ENCODE measurements at regions of chr1 and their contacts with region 1.

Region 1: DNA sequence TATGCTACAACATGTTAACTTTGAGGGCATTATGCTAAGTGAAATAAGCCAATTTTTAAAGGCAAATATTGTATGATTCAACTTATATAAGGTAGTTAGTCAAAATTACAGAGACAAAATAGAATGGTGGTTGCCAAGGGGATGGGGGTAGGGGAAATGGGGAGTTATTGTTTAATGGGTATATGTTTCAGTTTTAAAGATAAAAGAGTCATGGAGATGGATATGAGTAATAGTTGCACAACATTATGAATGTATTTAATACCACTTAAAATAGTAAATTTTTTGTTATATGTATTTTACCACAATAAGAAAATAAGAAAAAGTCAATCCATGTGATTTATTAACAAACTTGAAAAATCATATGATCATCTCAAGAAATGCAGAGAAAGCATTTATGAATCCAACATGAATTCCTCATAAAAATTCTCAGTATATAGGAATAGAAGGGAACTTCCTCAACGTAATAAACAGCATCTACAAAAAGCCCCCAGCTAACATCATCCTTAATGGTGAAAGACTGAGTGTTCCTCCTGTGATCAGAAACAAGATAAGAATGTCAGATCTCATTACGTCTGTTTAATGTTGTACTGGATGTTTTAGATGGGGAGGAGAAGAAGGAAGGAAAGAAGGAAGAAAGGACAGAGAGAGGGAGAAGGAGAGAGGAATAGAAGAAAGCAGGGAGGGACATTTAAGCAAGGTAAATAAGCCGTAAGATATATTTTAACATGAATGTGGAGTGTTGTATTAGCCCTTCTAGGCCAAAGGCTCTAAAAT is 6.7 kb upstream of the TSEN15 start:
- DNase-seq: no peak
- H3K4me3 ChIP-seq: no peak overlapping the region
- H3K27ac ChIP-seq: no peak overlapping the region
- H3K27me3 ChIP-seq: no peaks in the 10 kb centered on the region
- CTCF ChIP-seq: no peak

Region 2: GRCh38 chr1:183567584-183567983 is 477.2 kb before region 1 on chr1:
- intact Hi-C with region 1: no loop called
- DNase-seq: no peak
- H3K4me3 ChIP-seq: no peak overlapping the region
- H3K27ac ChIP-seq: peak overlapping the region in 2 of 59 donors; percentile 15 to 48
- H3K27me3 ChIP-seq: no peaks in the 10 kb centered on the region
- CTCF ChIP-seq: no peak

Region 3: GRCh38 chr1:183942933-183943693 is 101.7 kb before region 1 on chr1:
- intact Hi-C with region 1: loop called in 1 of 2 experiments (anchors 5 kb)
- DNase-seq: no peak
- H3K4me3 ChIP-seq: no peak overlapping the region
- H3K27ac ChIP-seq: peak overlapping the region in 58 of 59 donors; percentile 23 to 100 (median 80)
- H3K27me3 ChIP-seq: no peaks in the 10 kb centered on the region
- CTCF ChIP-seq: peak in 2 of 56 donors; percentile 11 to 13